CD4-positive, alpha-beta T cell (primary cell): ENCODE measurements at regions of chr15 and their contacts with region 1.

Region 1: DNA sequence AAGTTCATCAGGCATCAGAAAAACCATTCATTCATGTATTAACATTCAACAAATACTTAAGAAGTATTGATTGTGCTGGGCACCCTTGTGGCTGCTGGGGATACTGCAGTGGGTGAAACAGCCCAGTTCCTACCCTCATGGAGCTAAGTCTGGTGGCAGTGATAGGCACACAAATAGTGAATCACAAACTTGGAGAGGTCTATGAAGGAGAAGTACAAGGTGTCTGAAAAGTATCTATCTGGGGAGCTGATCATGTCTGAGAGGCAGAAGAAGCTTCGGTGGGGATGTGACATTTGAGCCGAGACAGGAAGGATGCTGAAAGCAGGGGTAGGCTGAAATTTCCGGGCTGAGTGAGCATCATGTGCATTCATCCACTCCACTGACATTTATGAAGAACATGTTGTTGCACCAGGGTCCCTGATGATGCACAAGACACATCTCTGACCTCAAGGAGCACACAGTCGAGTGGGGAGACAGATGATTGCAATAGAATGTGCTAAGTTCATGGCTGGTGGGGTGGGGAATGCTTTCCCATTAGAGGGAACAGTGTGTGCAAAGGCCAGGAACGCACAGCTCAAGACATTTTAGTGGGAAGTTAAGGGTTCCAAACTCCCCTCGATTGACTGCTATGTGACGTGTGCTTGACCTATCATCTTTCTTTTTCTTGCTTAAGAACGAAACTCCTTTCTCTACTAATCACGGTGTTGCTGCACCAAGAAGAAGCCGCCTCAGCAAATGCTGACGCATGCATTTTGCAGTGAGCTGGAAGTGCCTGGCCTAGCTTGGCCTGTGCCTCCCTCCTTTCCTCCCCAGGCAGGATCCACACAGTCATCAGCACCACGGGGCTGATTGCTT is 309.1 kb upstream of the ICE2 start:
- DNase-seq: peak in 12 of 14 experiments; percentile 13 to 71 (median 40)
- ATAC-seq: peak; percentile 78
- H3K4me3 ChIP-seq: no peak overlapping the region
- H3K4me3 Mint-ChIP-seq: peak overlapping the region; percentile 55
- H3K27ac ChIP-seq: peak overlapping the region in 1 of 2 donors; percentile 56
- H3K27ac Mint-ChIP-seq: peak overlapping the region; percentile 84
- H3K4me1 ChIP-seq: peaks cover 36% of the 10 kb centered on the region
- H3K4me1 Mint-ChIP-seq: peaks cover 34% of the 10 kb centered on the region
- H3K27me3 ChIP-seq: no peaks in the 10 kb centered on the region
- H3K27me3 Mint-ChIP-seq: no peaks in the 10 kb centered on the region
- CTCF ChIP-seq: peak; percentile 66

Region 2: GRCh38 chr15:60798821-60799220 is 10.8 kb after region 1 on chr15:
- CTCF ChIA-PET with region 1: interaction called, 22 read pairs
- POLR2A ChIA-PET with region 1: interaction called, 10 read pairs
- intact Hi-C with region 1: no loop called
- DNase-seq: peak in 3 of 14 experiments; percentile 36 to 64 (median 38)
- ATAC-seq: peak; percentile 25
- H3K4me3 ChIP-seq: no peak overlapping the region
- H3K4me3 Mint-ChIP-seq: peak overlapping the region; percentile 5
- H3K27ac ChIP-seq: peak overlapping the region; percentile 15 to 76
- H3K27ac Mint-ChIP-seq: peak overlapping the region; percentile 90
- H3K4me1 ChIP-seq: peaks cover 81% of the 10 kb centered on the region
- H3K4me1 Mint-ChIP-seq: peaks cover 91% of the 10 kb centered on the region
- H3K27me3 ChIP-seq: no peaks in the 10 kb centered on the region
- H3K27me3 Mint-ChIP-seq: no peaks in the 10 kb centered on the region
- CTCF ChIP-seq: no peak